B cell (primary cell): ENCODE measurements at regions of chr9 and their contacts with region 1.

Region 1: DNA sequence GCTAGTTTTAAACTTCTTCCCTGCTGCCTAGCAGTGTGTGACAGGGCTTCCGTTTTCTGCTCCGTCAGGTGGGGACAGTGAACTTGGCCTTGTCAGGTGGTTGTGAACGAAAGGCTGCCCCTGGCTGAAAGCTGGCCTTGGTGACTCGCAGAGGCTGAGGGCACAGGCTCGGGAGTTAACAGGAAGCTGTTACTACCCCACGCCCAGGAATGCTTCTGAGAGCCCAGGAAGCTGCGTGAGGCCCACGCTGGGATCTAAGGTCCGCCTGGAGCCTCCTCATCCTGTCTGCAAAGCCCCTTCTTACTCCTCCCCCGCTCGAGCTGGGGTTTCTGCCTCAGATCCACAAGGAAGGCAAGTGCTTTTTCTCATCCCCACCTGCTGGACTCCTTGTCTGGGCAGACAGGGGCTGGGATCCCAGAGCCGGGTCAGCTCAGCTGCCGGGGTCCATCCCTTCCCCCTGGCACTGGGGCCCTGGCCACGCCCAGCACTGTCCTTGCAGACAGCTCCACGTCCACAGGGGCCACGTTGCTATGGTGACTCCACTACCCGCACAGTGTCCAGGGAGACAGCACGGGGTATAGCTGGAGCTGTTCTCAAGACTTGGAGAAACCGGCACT is 124.7 kb upstream of the TBC1D2 start:
- DNase-seq: peak; percentile 65
- ATAC-seq: peak; percentile 51
- H3K4me3 ChIP-seq: peak overlapping the region in 1 of 5 experiments; percentile 8
- H3K4me3 Mint-ChIP-seq: peak overlapping the region; percentile 56
- H3K27ac ChIP-seq: peak overlapping the region; percentile 73 to 77
- H3K27ac Mint-ChIP-seq: peak overlapping the region; percentile 88
- H3K4me1 ChIP-seq: peaks cover 41 to 69% of the 10 kb centered on the region in 2 donors
- H3K4me1 Mint-ChIP-seq: peaks cover 51% of the 10 kb centered on the region
- H3K27me3 ChIP-seq: no peaks in the 10 kb centered on the region
- H3K27me3 Mint-ChIP-seq: no peaks in the 10 kb centered on the region
- CTCF ChIP-seq: no peak

Region 2: GRCh38 chr9:98347642-98348041 is 32.5 kb before region 1 on chr9:
- CTCF ChIA-PET with region 1: no interaction called
- POLR2A ChIA-PET with region 1: no interaction called
- intact Hi-C with region 1: no loop called
- DNase-seq: no peak
- ATAC-seq: no peak
- H3K4me3 ChIP-seq: no peak overlapping the region
- H3K4me3 Mint-ChIP-seq: no peak overlapping the region
- H3K27ac ChIP-seq: no peak overlapping the region
- H3K27ac Mint-ChIP-seq: no peak overlapping the region
- H3K4me1 ChIP-seq: no peaks in the 10 kb centered on the region
- H3K4me1 Mint-ChIP-seq: no peaks in the 10 kb centered on the region
- H3K27me3 ChIP-seq: peaks cover 0 to 13% (median 3%) of the 10 kb centered on the region in 4 experiments
- H3K27me3 Mint-ChIP-seq: peaks cover 41% of the 10 kb centered on the region
- CTCF ChIP-seq: no peak

Region 3: DNA sequence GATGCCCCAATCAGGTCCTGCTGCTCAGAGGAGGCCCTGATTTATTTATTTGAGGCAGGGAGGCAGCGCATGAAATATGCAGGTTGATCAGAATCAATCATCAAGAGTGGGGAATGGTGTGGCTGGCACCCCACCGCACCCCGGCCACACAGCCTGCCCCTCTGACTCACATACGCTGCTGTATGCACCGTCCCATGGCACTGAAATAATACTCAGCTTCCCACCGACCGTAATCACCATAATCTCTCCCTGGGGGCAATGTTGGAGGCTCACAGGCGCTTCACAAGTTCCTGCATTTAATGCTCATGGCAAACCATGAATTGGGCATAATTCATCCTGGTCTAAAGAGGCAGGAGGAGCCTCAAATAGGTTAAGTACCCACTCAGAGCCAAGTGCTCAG is 16.5 kb after region 1 on chr9:
- CTCF ChIA-PET with region 1: no interaction called
- POLR2A ChIA-PET with region 1: interaction called, 3 read pairs
- intact Hi-C with region 1: loop called (anchors 2 kb)
- DNase-seq: no peak
- ATAC-seq: no peak
- H3K4me3 ChIP-seq: no peak overlapping the region
- H3K4me3 Mint-ChIP-seq: no peak overlapping the region
- H3K27ac ChIP-seq: no peak overlapping the region
- H3K27ac Mint-ChIP-seq: no peak overlapping the region
- H3K4me1 ChIP-seq: peaks cover 24 to 25% of the 10 kb centered on the region in 2 donors
- H3K4me1 Mint-ChIP-seq: peaks cover 23% of the 10 kb centered on the region
- H3K27me3 ChIP-seq: no peaks in the 10 kb centered on the region
- H3K27me3 Mint-ChIP-seq: peaks cover 7% of the 10 kb centered on the region
- CTCF ChIP-seq: no peak